CD8-positive, alpha-beta T cell (primary cell): ENCODE measurements at regions of chr17 and their contacts with region 1.

Region 1: DNA sequence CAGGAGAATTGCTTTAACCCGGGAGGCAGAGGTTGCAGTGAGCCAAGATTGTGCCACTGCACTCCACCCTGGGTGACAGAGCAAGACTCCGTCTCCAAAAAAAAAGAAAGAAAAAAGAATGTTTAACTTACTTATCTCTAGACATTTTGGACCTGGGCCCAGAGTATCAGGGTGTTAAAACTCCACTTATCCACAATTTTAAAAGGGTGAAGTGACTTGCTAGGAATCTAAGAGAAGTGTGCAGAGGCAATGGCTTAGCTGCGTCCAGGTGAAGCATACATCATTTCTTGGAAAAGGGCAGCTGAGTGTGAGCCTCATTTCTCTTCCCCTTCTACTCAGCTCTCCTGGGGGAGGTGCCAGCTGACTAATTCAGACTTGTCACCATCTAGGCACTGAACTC is 25.1 kb downstream of the ALDH3A2 start:
- DNase-seq: no peak
- ATAC-seq: no peak
- H3K4me3 ChIP-seq: no peak overlapping the region
- H3K4me3 Mint-ChIP-seq: no peak overlapping the region
- H3K27ac ChIP-seq: no peak overlapping the region
- H3K27ac Mint-ChIP-seq: no peak overlapping the region
- H3K4me1 ChIP-seq: no peaks in the 10 kb centered on the region
- H3K4me1 Mint-ChIP-seq: no peaks in the 10 kb centered on the region
- H3K27me3 ChIP-seq: no peaks in the 10 kb centered on the region
- H3K27me3 Mint-ChIP-seq: no peaks in the 10 kb centered on the region
- CTCF ChIP-seq: no peak

Region 2: DNA sequence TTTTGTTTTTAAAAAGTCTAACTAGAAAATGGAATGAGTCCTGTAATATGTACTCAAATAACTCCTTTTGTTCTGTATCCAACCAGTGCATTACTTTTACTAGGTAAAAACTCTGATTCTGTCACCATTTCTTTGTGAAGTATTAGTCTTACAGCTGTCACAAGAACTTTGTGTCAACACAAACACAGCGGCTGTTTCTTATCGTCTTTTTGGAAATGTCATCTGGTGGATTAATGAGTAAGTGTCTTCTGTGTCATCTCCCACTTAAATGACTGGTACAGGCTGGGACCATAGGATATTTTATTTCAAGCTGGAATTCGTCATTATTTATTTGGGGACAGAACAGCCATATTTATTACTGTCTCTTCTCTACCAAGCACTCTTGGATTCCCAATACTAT is 44.2 kb before region 1 on chr17:
- CTCF ChIA-PET with region 1: no interaction called
- POLR2A ChIA-PET with region 1: no interaction called
- intact Hi-C with region 1: loop called in 1 of 2 experiments (anchors 1 kb)
- DNase-seq: no peak
- ATAC-seq: no peak
- H3K4me3 ChIP-seq: no peak overlapping the region
- H3K4me3 Mint-ChIP-seq: no peak overlapping the region
- H3K27ac ChIP-seq: no peak overlapping the region
- H3K27ac Mint-ChIP-seq: no peak overlapping the region
- H3K4me1 ChIP-seq: no peaks in the 10 kb centered on the region
- H3K4me1 Mint-ChIP-seq: no peaks in the 10 kb centered on the region
- H3K27me3 ChIP-seq: no peaks in the 10 kb centered on the region
- H3K27me3 Mint-ChIP-seq: peaks cover 17% of the 10 kb centered on the region
- CTCF ChIP-seq: no peak

Region 3: GRCh38 chr17:19686400-19687090 is 12.9 kb after region 1 on chr17:
- CTCF ChIA-PET with region 1: no interaction called
- POLR2A ChIA-PET with region 1: no interaction called
- intact Hi-C with region 1: no loop called
- DNase-seq: no peak
- ATAC-seq: no peak
- H3K4me3 ChIP-seq: no peak overlapping the region
- H3K4me3 Mint-ChIP-seq: no peak overlapping the region
- H3K27ac ChIP-seq: no peak overlapping the region
- H3K27ac Mint-ChIP-seq: no peak overlapping the region
- H3K4me1 ChIP-seq: no peaks in the 10 kb centered on the region
- H3K4me1 Mint-ChIP-seq: no peaks in the 10 kb centered on the region
- H3K27me3 ChIP-seq: no peaks in the 10 kb centered on the region
- H3K27me3 Mint-ChIP-seq: no peaks in the 10 kb centered on the region
- CTCF ChIP-seq: no peak